ENCODE measurements at regions of chr19 and their contacts with region 1.

Region 1: DNA sequence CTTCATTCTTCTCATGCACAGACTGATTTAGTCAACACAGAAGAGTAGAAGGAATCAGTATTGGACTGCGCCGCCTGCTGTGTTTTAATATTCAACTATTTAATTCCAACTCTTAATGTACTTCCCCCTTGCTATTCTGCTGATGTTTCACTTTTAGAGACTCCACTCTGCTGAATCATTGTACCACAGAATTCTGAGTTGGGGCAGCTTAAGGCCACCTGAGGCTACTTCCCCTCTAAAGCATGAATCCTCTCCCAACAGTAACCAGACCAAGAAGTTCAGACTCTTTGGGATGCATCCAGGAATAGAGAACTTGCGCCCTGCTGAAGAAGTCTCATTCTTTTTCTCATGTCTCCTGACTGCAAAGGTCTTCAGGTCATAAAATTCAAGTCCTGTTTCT is 708.8 kb downstream of the UQCRFS1 start:
- DNase-seq: no peak
- ATAC-seq: no peak
- H3K4me3 ChIP-seq: no peak overlapping the region
- H3K4me3 Mint-ChIP-seq: peak overlapping the region; percentile 62
- H3K27ac ChIP-seq: peak overlapping the region; percentile 42
- H3K27ac Mint-ChIP-seq: peak overlapping the region; percentile 91 to 94
- H3K4me1 ChIP-seq: peaks cover 63% of the 10 kb centered on the region
- H3K4me1 Mint-ChIP-seq: peaks cover 90 to 94% of the 10 kb centered on the region in 2 donors
- H3K27me3 ChIP-seq: no peaks in the 10 kb centered on the region
- H3K27me3 Mint-ChIP-seq: no peaks in the 10 kb centered on the region
- CTCF ChIP-seq: no peak

Region 2: DNA sequence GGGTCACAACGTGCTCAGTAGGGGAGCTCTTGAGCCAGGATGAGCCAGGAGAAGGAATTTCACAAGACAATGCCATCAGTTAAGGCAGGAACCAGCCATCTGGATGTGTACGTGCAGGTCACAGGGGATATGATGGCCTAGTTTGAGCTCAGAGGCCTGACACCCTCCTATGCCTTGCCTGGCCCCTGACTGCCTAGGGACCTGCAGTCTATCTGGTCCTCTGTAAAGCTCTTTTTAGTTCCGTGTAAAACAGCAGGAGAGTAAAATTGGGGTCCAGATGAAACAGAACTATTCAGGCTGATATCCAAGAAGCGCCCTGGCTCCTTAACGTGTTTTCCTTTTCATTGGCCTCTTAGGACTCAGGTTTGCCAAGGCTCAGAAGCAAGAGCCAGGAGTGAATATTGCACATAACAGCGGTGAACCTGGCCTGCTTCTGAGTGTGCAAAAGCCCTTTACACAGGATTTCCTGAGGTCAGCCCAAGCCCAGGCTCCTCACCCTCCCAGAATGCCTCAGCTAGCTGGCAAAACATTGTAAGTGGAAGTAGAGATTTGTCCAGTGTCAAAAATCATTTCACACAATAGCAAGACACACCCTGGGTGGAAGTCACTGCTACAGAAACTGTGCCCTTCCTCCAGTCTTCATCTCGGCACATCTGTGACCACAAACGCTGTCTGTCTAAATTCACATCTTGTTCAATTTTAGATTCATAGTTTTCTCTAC is 68.4 kb before region 1 on chr19:
- intact Hi-C with region 1: loop called (anchors 2 kb)
- DNase-seq: peak; percentile 14 to 21
- ATAC-seq: peak; percentile 74 to 87 (median 74)
- H3K4me3 ChIP-seq: no peak overlapping the region
- H3K4me3 Mint-ChIP-seq: peak overlapping the region; percentile 82
- H3K27ac ChIP-seq: peak overlapping the region; percentile 73
- H3K27ac Mint-ChIP-seq: peak overlapping the region; percentile 86
- H3K4me1 ChIP-seq: peaks cover 40% of the 10 kb centered on the region
- H3K4me1 Mint-ChIP-seq: peaks cover 47 to 62% of the 10 kb centered on the region in 2 donors
- H3K27me3 ChIP-seq: no peaks in the 10 kb centered on the region
- H3K27me3 Mint-ChIP-seq: no peaks in the 10 kb centered on the region
- CTCF ChIP-seq: no peak

Region 3: DNA sequence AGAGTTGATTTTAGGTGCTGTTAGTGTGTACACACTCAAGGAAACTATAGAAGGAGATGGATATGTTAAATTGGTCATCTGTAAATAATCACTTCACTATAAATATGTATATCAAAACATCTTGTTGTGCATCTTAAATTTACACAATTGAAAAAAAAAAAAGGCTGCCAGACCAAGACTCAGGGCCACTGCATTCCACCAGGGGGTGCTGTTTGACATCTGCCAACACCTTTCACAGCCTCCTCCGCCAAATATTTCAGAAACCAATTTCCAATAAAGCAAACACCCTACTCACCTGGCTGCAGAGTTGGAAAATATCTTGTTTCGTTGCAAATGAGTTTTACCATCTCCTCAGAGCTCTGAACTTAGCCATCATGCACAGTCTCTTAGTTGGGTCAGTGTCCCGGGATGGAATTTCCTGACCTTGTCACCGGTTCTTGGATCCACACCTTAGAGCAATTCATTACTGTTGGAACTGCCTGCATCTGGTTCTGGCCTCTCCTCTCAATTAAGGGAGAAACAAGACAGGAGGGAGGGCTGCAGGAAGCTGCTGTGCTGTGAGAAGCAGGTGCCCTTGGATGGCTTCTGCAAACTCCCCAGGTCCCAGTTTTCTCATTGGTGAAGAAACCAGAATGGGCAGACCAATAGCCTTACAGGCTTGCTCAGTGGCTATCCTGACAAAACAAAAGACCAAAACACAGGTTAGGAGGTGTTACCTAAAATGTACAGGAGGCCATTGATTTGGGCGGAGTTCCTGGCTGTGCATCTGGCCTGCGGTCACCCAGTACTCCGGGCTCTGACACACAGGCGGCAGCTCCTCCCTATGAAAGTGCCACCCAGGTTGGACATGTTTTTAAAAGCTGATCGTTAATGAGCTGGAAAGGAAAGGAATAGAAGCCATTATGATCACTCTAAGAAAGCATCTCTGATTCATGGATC is 37.8 kb before region 1 on chr19:
- intact Hi-C with region 1: loop called (anchors 5 kb)
- DNase-seq: peak; percentile 78 to 79
- ATAC-seq: peak; percentile 37 to 60 (median 58)
- H3K4me3 ChIP-seq: no peak overlapping the region
- H3K4me3 Mint-ChIP-seq: no peak overlapping the region
- H3K27ac ChIP-seq: no peak overlapping the region
- H3K27ac Mint-ChIP-seq: peak overlapping the region in 1 of 2 donors; percentile 50
- H3K4me1 ChIP-seq: peaks cover 47% of the 10 kb centered on the region
- H3K4me1 Mint-ChIP-seq: peaks cover 53 to 63% of the 10 kb centered on the region in 2 donors
- H3K27me3 ChIP-seq: no peaks in the 10 kb centered on the region
- H3K27me3 Mint-ChIP-seq: no peaks in the 10 kb centered on the region
- CTCF ChIP-seq: peak; percentile 89

Region 4: GRCh38 chr19:28481674-28482073 is 22.5 kb before region 1 on chr19:
- intact Hi-C with region 1: loop called (anchors 1 kb)
- DNase-seq: no peak
- ATAC-seq: no peak
- H3K4me3 ChIP-seq: no peak overlapping the region
- H3K4me3 Mint-ChIP-seq: no peak overlapping the region
- H3K27ac ChIP-seq: peak overlapping the region; percentile 15
- H3K27ac Mint-ChIP-seq: peak overlapping the region; percentile 85 to 86
- H3K4me1 ChIP-seq: peaks cover 24% of the 10 kb centered on the region
- H3K4me1 Mint-ChIP-seq: peaks cover 36 to 54% of the 10 kb centered on the region in 2 donors
- H3K27me3 ChIP-seq: no peaks in the 10 kb centered on the region
- H3K27me3 Mint-ChIP-seq: no peaks in the 10 kb centered on the region
- CTCF ChIP-seq: no peak

Region 5: GRCh38 chr19:28553005-28553404 is 48.9 kb after region 1 on chr19:
- intact Hi-C with region 1: loop called (anchors 5 kb)
- DNase-seq: peak; percentile 10 to 29
- ATAC-seq: peak; percentile 31 to 74 (median 57)
- H3K4me3 ChIP-seq: no peak overlapping the region
- H3K4me3 Mint-ChIP-seq: peak overlapping the region; percentile 35
- H3K27ac ChIP-seq: peak overlapping the region; percentile 51
- H3K27ac Mint-ChIP-seq: peak overlapping the region; percentile 90 to 95
- H3K4me1 ChIP-seq: peaks cover 55% of the 10 kb centered on the region
- H3K4me1 Mint-ChIP-seq: peaks cover 76 to 83% of the 10 kb centered on the region in 2 donors
- H3K27me3 ChIP-seq: no peaks in the 10 kb centered on the region
- H3K27me3 Mint-ChIP-seq: no peaks in the 10 kb centered on the region
- CTCF ChIP-seq: no peak

Region 6: GRCh38 chr19:28574212-28574611 is 70.1 kb after region 1 on chr19:
- intact Hi-C with region 1: loop called (anchors 2 kb)
- DNase-seq: no peak
- ATAC-seq: no peak
- H3K4me3 ChIP-seq: no peak overlapping the region
- H3K4me3 Mint-ChIP-seq: no peak overlapping the region
- H3K27ac ChIP-seq: no peak overlapping the region
- H3K27ac Mint-ChIP-seq: peak overlapping the region; percentile 85 to 88
- H3K4me1 ChIP-seq: peaks cover 8% of the 10 kb centered on the region
- H3K4me1 Mint-ChIP-seq: peaks cover 26 to 30% of the 10 kb centered on the region in 2 donors
- H3K27me3 ChIP-seq: no peaks in the 10 kb centered on the region
- H3K27me3 Mint-ChIP-seq: no peaks in the 10 kb centered on the region
- CTCF ChIP-seq: no peak

Measured in natural killer cell (primary cell).